Posterior cingulate gyrus (tissue), 11 donors: ENCODE measurements at regions of chr3 and their contacts with region 1.

Region 1: GRCh38 chr3:77038468-77038929 is 1.4 kb upstream of the ROBO2 start:
- DNase-seq: peak; percentile 43 to 94 (median 68)

Region 2: GRCh38 chr3:76923485-76923884 is 115.0 kb before region 1 on chr3:
- intact Hi-C with region 1: no loop called
- DNase-seq: no peak

Region 3: GRCh38 chr3:77134769-77135168 is 96.3 kb after region 1 on chr3:
- intact Hi-C with region 1: no loop called
- DNase-seq: no peak

Region 4: DNA sequence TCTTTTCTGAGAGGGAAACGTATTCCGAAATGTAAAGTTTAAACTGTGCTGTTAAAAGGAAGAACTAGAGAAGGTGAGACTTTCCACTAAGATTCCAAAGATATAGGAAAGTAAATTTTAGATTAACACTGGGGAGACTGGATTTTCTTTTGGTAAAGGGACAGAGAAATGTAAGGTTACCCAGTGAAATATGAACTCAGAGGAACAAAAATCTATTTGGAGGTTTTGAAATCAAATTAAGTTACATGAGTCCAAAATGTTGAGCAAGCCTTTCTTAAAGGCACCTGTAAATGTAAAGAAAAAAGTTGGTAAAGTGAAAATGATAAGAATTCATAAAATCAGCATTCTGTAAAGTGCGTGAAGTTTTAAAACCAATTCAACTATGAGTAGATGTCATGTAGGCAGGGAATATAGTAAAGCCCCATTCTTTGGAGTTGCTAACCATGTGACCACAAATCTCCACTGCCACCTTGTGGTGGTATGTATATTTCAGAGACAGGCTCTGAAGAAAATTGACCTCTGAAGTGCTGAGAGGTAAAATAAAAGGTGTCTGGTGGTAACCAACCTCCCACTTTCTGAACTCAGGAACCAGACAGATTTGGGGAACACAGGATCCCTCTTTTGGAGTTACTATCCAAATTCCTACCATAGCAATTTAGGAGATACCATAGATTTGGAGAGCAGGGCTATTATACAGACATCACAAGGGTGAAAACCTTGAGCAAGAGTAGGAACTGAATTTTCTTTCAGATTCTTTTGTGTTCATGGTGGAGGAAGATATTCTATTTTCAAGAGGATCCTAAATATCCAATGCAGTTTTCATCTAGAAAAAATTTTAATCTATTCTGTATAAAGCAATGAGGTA is 216.7 kb after region 1 on chr3:
- intact Hi-C with region 1: loop called (anchors 1 kb)
- DNase-seq: peak in 2 of 10 donors; percentile 26 to 38

Region 5: GRCh38 chr3:77319711-77320110 is 281.2 kb after region 1 on chr3:
- intact Hi-C with region 1: loop called (anchors 2 kb)
- DNase-seq: no peak

Region 6: DNA sequence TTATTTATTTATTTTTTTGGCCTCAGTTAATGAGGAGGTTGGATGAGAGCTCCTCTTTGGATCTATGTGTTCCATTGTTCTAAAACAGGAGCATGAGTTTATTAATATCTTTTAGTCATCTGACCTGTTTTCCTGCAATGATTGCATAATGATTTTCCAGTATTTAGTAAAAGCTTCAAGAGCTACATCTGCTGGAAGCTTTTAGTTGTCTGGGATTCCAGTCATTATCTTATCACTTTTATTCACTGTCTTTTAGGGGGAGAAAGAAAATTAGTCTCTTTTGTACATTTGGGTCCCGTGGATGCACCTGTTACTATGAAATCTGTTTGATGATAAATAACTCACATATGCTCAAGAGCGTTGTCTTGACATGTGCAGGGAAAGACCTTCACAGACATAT is 1459.3 kb after region 1 on chr3:
- intact Hi-C with region 1: loop called (anchors 5 kb)
- DNase-seq: no peak

Region 7: GRCh38 chr3:78645628-78646310 is 1607.3 kb after region 1 on chr3:
- intact Hi-C with region 1: loop called (anchors 5 kb)
- DNase-seq: no peak